Sigmoid colon (tissue), 7 donors: ENCODE measurements at regions of chr22 and their contacts with region 1.

Region 1: GRCh38 chr22:35728639-35729308 is 11.1 kb downstream of the APOL5 start:
- DNase-seq: no peak
- H3K4me3 ChIP-seq: no peak overlapping the region
- H3K27ac ChIP-seq: no peak overlapping the region
- H3K4me1 ChIP-seq: peaks cover 0 to 7% (median 0%) of the 10 kb centered on the region in 4 donors
- H3K27me3 ChIP-seq: no peaks in the 10 kb centered on the region
- CTCF ChIP-seq: no peak
- EP300 ChIP-seq: no peak
- POLR2A ChIP-seq: no peak

Region 2: DNA sequence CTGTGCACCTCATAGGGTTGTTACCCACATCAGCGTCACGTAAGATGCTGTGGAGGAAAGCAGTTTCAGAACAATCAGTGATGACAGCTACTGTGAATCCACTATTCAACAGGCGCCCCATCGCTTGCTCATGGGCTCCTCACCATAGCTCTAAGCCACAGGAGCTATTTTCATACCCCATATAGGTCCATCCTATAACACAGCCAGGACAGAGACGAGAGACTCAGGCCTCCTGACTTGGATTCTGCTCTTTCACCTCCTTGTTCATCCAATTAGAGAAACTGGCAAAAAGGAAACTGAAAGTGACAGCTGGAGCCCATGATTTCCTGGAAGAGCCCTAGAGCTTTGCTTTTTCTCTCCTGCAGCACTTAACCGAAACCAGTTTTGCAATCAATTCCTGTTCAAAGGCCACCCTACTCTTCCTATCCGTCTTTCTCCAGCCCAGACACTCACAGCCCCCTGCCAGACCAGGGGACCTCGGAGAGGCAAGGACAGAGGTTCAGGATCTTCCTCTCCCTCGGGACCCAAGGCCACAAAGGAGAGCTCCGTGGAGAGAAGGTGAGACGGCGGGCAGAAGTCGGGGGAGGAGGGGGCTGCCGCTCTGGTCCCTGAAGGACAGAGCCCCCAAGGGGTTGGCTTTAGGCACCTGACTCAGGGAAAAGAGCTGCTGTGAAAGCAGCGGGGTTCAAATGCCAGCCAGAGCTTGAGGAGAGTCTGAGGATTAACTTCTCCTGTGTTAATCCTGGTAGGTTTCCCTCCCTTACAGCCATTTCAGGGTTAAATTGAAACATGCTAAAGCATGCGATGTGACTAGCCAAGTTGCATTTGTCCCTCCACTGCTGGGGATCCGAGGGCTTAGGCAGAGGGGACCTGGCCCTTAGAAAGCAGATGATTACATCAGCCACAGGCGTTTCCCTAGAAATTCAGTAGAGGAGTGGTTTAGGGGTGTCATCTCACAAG is 80.4 kb before region 1 on chr22 and contains the start of gene APOL6:
- intact Hi-C with region 1: no loop called
- DNase-seq: peak; percentile 74
- H3K4me3 ChIP-seq: peak within 1 kb of the TSS; percentile 58 to 74 (median 67)
- H3K27ac ChIP-seq: peak within 1 kb of the TSS; percentile 85 to 93 (median 91)
- H3K4me1 ChIP-seq: peaks cover 0 to 44% (median 34%) of the 10 kb centered on the region in 4 donors
- H3K27me3 ChIP-seq: no peaks in the 10 kb centered on the region
- CTCF ChIP-seq: no peak
- EP300 ChIP-seq: peak in 1 of 4 donors; percentile 13
- POLR2A ChIP-seq: peak; percentile 8 to 35
- total RNA-seq, gene APOL6: 15.8 to 28.2 (median 17.0) TPM

Region 3: DNA sequence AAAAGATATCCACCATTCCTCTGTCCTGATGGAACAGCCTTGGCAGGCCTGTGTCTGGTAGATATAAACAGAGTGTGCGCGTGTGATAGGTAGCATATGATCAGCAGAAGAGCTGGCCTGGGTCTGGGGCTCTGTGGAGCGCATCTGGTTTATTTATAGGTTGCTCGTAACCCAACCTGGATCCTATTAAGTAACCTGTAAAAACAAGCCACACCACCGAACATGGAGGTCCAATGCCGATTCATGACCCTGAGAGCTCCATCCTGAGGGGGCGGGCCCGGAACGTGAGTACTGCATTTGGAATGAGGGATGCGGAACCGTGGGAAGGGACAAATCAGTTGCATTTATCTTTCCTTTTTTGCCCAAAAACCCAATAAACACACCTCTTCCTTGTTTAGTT is 43.0 kb before region 1 on chr22:
- intact Hi-C with region 1: loop called (anchors 1 kb)
- DNase-seq: no peak
- H3K4me3 ChIP-seq: no peak overlapping the region
- H3K27ac ChIP-seq: no peak overlapping the region
- H3K4me1 ChIP-seq: no peaks in the 10 kb centered on the region
- H3K27me3 ChIP-seq: no peaks in the 10 kb centered on the region
- CTCF ChIP-seq: no peak
- EP300 ChIP-seq: no peak
- POLR2A ChIP-seq: no peak

Region 4: GRCh38 chr22:35802885-35803284 is 74.1 kb after region 1 on chr22:
- intact Hi-C with region 1: no loop called
- DNase-seq: no peak
- H3K4me3 ChIP-seq: no peak overlapping the region
- H3K27ac ChIP-seq: no peak overlapping the region
- H3K4me1 ChIP-seq: peaks cover 0 to 59% (median 34%) of the 10 kb centered on the region in 4 donors
- H3K27me3 ChIP-seq: no peaks in the 10 kb centered on the region
- CTCF ChIP-seq: no peak
- EP300 ChIP-seq: no peak
- POLR2A ChIP-seq: no peak

Region 5: DNA sequence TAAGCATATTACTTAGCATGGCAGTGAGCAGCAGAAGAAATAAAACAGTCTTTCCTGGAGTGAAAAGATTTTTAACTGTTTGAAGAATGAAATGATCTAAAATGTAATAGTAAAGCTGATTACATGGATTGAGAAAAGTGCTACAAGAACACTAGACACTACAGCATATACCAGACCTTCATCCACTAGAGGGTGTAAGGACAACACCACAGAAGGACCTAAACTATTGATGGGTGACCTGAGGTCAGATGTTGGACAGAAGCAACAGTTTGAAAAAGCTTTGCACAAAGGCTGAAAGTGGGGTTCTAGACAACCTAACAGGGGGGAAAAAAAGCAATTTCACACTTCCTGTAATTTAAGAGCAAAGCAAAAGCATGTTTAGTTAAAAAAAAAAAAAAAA is 202.2 kb after region 1 on chr22:
- intact Hi-C with region 1: no loop called
- DNase-seq: no peak
- H3K4me3 ChIP-seq: no peak overlapping the region
- H3K27ac ChIP-seq: peak overlapping the region in 2 of 4 donors; percentile 11 to 12
- H3K4me1 ChIP-seq: peaks cover 0 to 19% (median 10%) of the 10 kb centered on the region in 4 donors
- H3K27me3 ChIP-seq: no peaks in the 10 kb centered on the region
- CTCF ChIP-seq: peak; percentile 57 to 78 (median 72)
- EP300 ChIP-seq: no peak
- POLR2A ChIP-seq: no peak